Body of pancreas (tissue), 4 donors: ENCODE measurements at regions of chr5 and their contacts with region 1.

Region 1: DNA sequence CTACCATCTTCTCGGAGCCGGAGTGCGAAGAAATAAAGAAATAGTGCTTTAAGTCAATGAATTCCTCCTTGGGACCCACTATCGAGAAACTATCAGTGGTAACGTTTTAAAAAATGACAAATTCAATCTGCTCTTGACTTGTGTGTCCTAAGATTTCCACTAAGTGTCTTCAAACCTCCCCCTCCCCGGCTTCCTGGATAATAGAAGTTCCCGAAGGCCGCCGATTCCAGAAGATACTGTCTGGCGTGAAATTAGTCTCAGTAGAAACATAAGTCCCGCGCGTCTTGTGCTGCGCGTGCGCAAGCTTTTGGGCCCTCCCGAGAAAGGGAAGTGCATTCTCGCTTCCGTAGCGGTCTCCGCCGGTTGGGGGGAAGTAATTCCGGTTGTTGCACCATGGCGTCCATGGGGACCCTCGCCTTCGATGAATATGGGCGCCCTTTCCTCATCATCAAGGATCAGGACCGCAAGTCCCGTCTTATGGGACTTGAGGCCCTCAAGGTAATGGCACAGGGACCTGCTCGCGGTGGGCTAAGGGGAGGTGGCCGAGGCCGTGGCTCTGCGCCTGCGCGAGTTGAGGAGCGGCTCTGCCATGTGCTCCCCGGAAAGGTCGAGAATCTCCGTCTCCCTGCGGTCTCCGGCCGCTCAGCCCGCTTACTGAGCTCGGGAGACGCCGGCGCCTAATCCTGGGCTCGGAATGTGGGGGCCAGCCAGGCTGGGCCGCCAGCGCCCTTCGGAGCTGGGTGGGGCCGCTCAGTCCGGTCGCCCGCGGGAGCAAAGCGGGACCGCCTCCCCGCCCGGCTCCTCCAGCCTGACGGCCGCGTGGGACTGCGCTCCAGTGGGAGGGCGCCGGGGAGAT is at the start of gene CCT5:
- DNase-seq: peak; percentile 93 to 97 (median 95)
- ATAC-seq: peak; percentile 94
- H3K4me3 ChIP-seq: peak within 1 kb of the TSS; percentile 64 to 89
- H3K27ac ChIP-seq: peak within 1 kb of the TSS; percentile 92 to 96 (median 95)
- H3K4me1 ChIP-seq: peaks cover 32% of the 10 kb centered on the region
- H3K27me3 ChIP-seq: no peaks in the 10 kb centered on the region
- CTCF ChIP-seq: peak in 1 of 7 experiments; percentile 21
- POLR2A ChIP-seq: peak; percentile 12 to 78 (median 70)
- total RNA-seq, gene CCT5: 45.4 to 76.1 TPM

Region 2: GRCh38 chr5:9544502-9545135 is 705.6 kb before region 1 on chr5:
- intact Hi-C with region 1: loop called (anchors 10 kb)
- DNase-seq: peak; percentile 85 to 89 (median 88)
- ATAC-seq: peak; percentile 77
- H3K4me3 ChIP-seq: peak overlapping the region; percentile 81 to 96
- H3K27ac ChIP-seq: peak overlapping the region; percentile 6 to 94 (median 64)
- H3K4me1 ChIP-seq: peaks cover 15% of the 10 kb centered on the region
- H3K27me3 ChIP-seq: no peaks in the 10 kb centered on the region
- CTCF ChIP-seq: peak; percentile 93 to 96 (median 95)
- POLR2A ChIP-seq: peak in 2 of 3 donors; percentile 41 to 49

Region 3: DNA sequence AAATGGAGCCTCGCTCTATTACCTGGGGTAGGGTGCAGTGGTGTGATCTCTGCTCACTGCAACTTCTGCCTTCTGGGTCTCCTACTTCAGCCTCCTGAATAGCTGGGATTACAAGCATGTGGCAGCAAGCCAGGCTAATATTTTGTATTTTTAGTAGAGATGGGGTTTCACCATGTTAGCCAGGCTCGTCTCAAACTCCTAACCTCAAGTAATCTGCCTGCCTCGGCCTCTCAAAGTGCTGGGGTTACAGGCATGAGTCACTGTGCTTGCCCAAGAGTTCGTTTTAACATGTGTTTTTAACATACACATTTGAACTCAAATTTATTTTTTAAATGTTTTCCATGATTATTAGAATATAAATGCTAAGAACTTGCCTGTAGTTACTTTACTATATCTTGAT is 137.5 kb after region 1 on chr5:
- intact Hi-C with region 1: loop called (anchors 10 kb)
- DNase-seq: no peak
- ATAC-seq: no peak
- H3K4me3 ChIP-seq: no peak overlapping the region
- H3K27ac ChIP-seq: no peak overlapping the region
- H3K4me1 ChIP-seq: no peaks in the 10 kb centered on the region
- H3K27me3 ChIP-seq: no peaks in the 10 kb centered on the region
- CTCF ChIP-seq: no peak
- POLR2A ChIP-seq: no peak